Mammary epithelial cell (primary cell): ENCODE measurements at regions of chr19 and their contacts with region 1.

Region 1: GRCh38 chr19:17654993-17655392 is 33.2 kb downstream of the UNC13A start:
- DNase-seq: no peak
- H3K4me3 ChIP-seq: no peak overlapping the region
- H3K27ac ChIP-seq: no peak overlapping the region
- H3K4me1 ChIP-seq: peaks cover 5% of the 10 kb centered on the region
- H3K27me3 ChIP-seq: no peaks in the 10 kb centered on the region
- CTCF ChIP-seq: no peak

Region 2: GRCh38 chr19:17539238-17540117 is 115.5 kb before region 1 on chr19:
- CTCF ChIA-PET with region 1: no interaction called
- dilution Hi-C with region 1: loop called (anchors 5 kb)
- in situ Hi-C with region 1: no loop called
- intact Hi-C with region 1: no loop called
- DNase-seq: peak; percentile 83
- H3K4me3 ChIP-seq: peak overlapping the region; percentile 24 to 51 (median 44)
- H3K27ac ChIP-seq: no peak overlapping the region
- H3K4me1 ChIP-seq: peaks cover 8% of the 10 kb centered on the region
- H3K27me3 ChIP-seq: no peaks in the 10 kb centered on the region
- CTCF ChIP-seq: peak in 1 of 2 donors; percentile 30

Region 3: DNA sequence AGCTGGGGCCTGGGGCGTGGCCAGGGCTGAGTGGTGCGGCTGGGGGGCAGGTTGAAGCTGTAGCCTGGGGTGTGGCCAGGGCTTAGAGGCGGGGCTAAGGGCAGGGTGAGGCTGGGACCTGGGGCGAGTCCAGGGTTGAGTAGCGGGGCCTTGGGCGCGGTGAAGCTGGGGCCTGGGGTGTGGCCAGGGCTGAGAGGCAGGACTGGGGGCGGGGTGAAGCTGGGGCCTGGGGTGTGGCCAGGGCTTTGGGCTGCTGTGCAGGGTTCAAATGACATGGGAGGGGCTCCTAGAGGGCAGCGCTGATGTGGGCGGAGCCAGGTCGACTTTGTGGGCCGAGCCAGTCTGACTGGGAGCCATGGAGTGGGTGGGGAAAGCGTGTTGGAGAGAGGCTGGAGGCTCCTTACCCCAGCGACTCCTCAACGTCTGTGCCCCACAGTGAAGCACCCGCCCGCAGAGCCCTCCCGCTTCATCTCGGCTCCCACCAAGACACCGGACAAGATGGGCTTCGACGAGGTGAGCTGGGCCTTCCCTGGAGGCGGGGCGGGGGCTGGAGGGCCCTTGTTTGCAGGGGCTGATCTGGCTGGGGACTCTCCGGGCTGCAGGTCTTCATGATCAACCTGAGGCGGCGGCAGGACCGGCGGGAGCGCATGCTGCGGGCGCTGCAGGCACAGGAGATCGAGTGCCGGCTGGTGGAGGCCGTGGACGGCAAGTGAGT is 78.1 kb before region 1 on chr19:
- CTCF ChIA-PET with region 1: no interaction called
- dilution Hi-C with region 1: no loop called
- in situ Hi-C with region 1: no loop called
- intact Hi-C with region 1: no loop called
- DNase-seq: peak; percentile 5
- H3K4me3 ChIP-seq: no peak overlapping the region
- H3K27ac ChIP-seq: no peak overlapping the region
- H3K4me1 ChIP-seq: no peaks in the 10 kb centered on the region
- H3K27me3 ChIP-seq: no peaks in the 10 kb centered on the region
- CTCF ChIP-seq: no peak

Region 4: DNA sequence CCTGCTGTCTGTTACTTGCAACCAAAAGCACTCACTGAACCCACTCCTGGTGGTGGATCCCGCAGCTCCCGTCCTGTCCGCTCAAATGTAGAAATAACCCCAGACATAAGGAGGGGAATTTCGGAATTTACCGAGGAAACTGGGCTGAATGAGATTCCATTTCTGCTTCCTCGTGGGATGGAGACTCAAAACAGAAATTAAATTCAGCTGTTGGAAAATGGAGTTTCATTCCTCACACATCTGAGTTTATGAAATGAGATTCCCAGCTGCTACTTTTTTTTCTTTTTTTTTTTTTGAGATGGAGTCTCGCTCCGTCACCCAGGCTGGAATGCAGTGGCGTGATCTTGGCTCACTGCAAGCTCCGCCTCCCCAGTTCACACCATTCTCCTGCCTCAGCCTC is 55.2 kb before region 1 on chr19:
- CTCF ChIA-PET with region 1: no interaction called
- dilution Hi-C with region 1: loop called (anchors 5 kb)
- in situ Hi-C with region 1: no loop called
- intact Hi-C with region 1: no loop called
- DNase-seq: no peak
- H3K4me3 ChIP-seq: no peak overlapping the region
- H3K27ac ChIP-seq: no peak overlapping the region
- H3K4me1 ChIP-seq: no peaks in the 10 kb centered on the region
- H3K27me3 ChIP-seq: peaks cover 4% of the 10 kb centered on the region
- CTCF ChIP-seq: no peak